CD14-positive monocyte (primary cell): ENCODE measurements at regions of chr13 and their contacts with region 1.

Region 1: GRCh38 chr13:41061075-41061913 is at the start of gene WBP4:
- DNase-seq: peak; percentile 82 to 93 (median 92)
- H3K4me3 ChIP-seq: peak within 1 kb of the TSS; percentile 57 to 99 (median 82)
- H3K4me3 Mint-ChIP-seq: peak within 1 kb of the TSS; percentile 98 to 100
- H3K27ac ChIP-seq: peak within 1 kb of the TSS; percentile 96
- H3K27ac Mint-ChIP-seq: peak within 1 kb of the TSS; percentile 98 to 100 (median 100)
- H3K4me1 ChIP-seq: peaks cover 26 to 46% of the 10 kb centered on the region in 2 donors
- H3K4me1 Mint-ChIP-seq: peaks cover 35% of the 10 kb centered on the region
- H3K27me3 ChIP-seq: no peaks in the 10 kb centered on the region
- H3K27me3 Mint-ChIP-seq: peaks cover 0 to 3% (median 3%) of the 10 kb centered on the region in 3 donors
- CTCF ChIP-seq: no peak
- polyA plus RNA-seq, gene WBP4: 2.8 to 3.8 (median 3.7) TPM

Region 2: GRCh38 chr13:40789275-40790133 is 271.8 kb before region 1 on chr13 and contains the start of gene SLC25A15:
- intact Hi-C with region 1: loop called in 1 of 2 experiments (anchors 10 kb)
- DNase-seq: peak; percentile 70 to 71 (median 71)
- H3K4me3 ChIP-seq: peak within 1 kb of the TSS; percentile 47 to 80 (median 52)
- H3K4me3 Mint-ChIP-seq: peak within 1 kb of the TSS; percentile 82 to 85
- H3K27ac ChIP-seq: peak within 1 kb of the TSS; percentile 16 to 62
- H3K27ac Mint-ChIP-seq: peak within 1 kb of the TSS; percentile 21 to 79 (median 42)
- H3K4me1 ChIP-seq: peaks cover 17 to 20% of the 10 kb centered on the region in 2 donors
- H3K4me1 Mint-ChIP-seq: peaks cover 24% of the 10 kb centered on the region
- H3K27me3 ChIP-seq: no peaks in the 10 kb centered on the region
- H3K27me3 Mint-ChIP-seq: peaks cover 0 to 6% (median 0%) of the 10 kb centered on the region in 3 donors
- CTCF ChIP-seq: peak; percentile 29
- polyA plus RNA-seq, gene SLC25A15: 0.79 to 5.0 (median 1.0) TPM

Region 3: GRCh38 chr13:40969169-40969901 is 92.0 kb before region 1 on chr13:
- intact Hi-C with region 1: loop called in 1 of 2 experiments (anchors 5 kb)
- DNase-seq: peak; percentile 52 to 80 (median 77)
- H3K4me3 ChIP-seq: peak overlapping the region in 1 of 3 experiments; percentile 69
- H3K4me3 Mint-ChIP-seq: peak overlapping the region; percentile 13 to 31
- H3K27ac ChIP-seq: peak overlapping the region; percentile 44 to 71
- H3K27ac Mint-ChIP-seq: peak overlapping the region; percentile 68 to 91 (median 86)
- H3K4me1 ChIP-seq: peaks cover 75 to 99% of the 10 kb centered on the region in 2 donors
- H3K4me1 Mint-ChIP-seq: peaks cover 93% of the 10 kb centered on the region
- H3K27me3 ChIP-seq: no peaks in the 10 kb centered on the region
- H3K27me3 Mint-ChIP-seq: no peaks in the 10 kb centered on the region
- CTCF ChIP-seq: no peak

Region 4: GRCh38 chr13:40982772-40983171 is 78.5 kb before region 1 on chr13:
- intact Hi-C with region 1: loop called in 1 of 2 experiments (anchors 5 kb)
- DNase-seq: peak; percentile 77 to 83 (median 83)
- H3K4me3 ChIP-seq: peak overlapping the region; percentile 56 to 99 (median 92)
- H3K4me3 Mint-ChIP-seq: peak overlapping the region; percentile 61 to 92
- H3K27ac ChIP-seq: peak overlapping the region; percentile 35 to 91
- H3K27ac Mint-ChIP-seq: peak overlapping the region; percentile 85 to 99 (median 92)
- H3K4me1 ChIP-seq: peaks cover 64 to 85% of the 10 kb centered on the region in 2 donors
- H3K4me1 Mint-ChIP-seq: peaks cover 55% of the 10 kb centered on the region
- H3K27me3 ChIP-seq: no peaks in the 10 kb centered on the region
- H3K27me3 Mint-ChIP-seq: no peaks in the 10 kb centered on the region
- CTCF ChIP-seq: no peak

Region 5: GRCh38 chr13:41019011-41019487 is 42.2 kb before region 1 on chr13 and contains the start of gene ELF1:
- intact Hi-C with region 1: loop called in 1 of 2 experiments (anchors 2 kb)
- DNase-seq: peak; percentile 89 to 94 (median 94)
- H3K4me3 ChIP-seq: peak within 1 kb of the TSS; percentile 86 to 100 (median 89)
- H3K4me3 Mint-ChIP-seq: peak within 1 kb of the TSS; percentile 83 to 93
- H3K27ac ChIP-seq: peak within 1 kb of the TSS; percentile 71 to 100
- H3K27ac Mint-ChIP-seq: peak within 1 kb of the TSS; percentile 97 to 100 (median 99)
- H3K4me1 ChIP-seq: peaks cover 32 to 38% of the 10 kb centered on the region in 2 donors
- H3K4me1 Mint-ChIP-seq: peaks cover 38% of the 10 kb centered on the region
- H3K27me3 ChIP-seq: no peaks in the 10 kb centered on the region
- H3K27me3 Mint-ChIP-seq: no peaks in the 10 kb centered on the region
- CTCF ChIP-seq: no peak
- polyA plus RNA-seq, gene ELF1: 63.1 to 83.3 (median 83.3) TPM

Region 6: DNA sequence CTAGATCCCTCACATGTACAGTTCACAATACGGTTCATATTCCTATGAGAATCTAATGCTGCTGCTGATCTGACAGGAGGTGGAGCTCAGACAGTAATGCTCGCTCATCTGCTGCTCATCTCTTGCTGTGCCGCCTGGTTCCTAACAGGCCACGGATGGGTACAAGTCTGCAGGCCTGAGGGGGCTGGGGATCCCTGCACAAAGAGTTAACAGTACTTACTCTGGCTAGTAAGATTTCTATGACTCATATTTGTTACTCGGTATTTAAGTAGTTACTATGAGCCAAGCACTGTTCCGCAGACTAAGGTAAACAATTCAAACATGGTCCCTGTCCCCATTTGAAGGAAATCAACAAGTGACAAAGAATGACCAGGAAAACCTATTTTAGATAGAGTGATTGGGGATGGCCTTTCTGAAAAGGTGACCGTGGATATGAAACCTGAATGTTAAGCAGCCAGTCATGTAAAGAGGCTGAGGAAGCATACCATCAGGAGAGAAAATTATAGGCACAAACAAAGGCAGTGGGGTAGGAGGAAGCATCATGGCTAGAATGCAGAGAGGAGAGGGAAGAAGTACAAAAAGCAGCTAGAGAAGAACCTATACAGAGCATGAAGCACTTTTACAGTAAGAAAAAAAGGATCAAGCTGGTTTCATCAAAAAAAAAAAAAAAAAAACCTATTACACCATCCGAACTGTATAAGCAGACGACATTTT is 20.5 kb before region 1 on chr13:
- intact Hi-C with region 1: no loop called
- DNase-seq: no peak
- H3K4me3 ChIP-seq: no peak overlapping the region
- H3K4me3 Mint-ChIP-seq: no peak overlapping the region
- H3K27ac ChIP-seq: no peak overlapping the region
- H3K27ac Mint-ChIP-seq: peak overlapping the region in 5 of 7 donors; percentile 5 to 53 (median 22)
- H3K4me1 ChIP-seq: no peaks in the 10 kb centered on the region
- H3K4me1 Mint-ChIP-seq: peaks cover 11% of the 10 kb centered on the region
- H3K27me3 ChIP-seq: no peaks in the 10 kb centered on the region
- H3K27me3 Mint-ChIP-seq: no peaks in the 10 kb centered on the region
- CTCF ChIP-seq: no peak

Region 7: DNA sequence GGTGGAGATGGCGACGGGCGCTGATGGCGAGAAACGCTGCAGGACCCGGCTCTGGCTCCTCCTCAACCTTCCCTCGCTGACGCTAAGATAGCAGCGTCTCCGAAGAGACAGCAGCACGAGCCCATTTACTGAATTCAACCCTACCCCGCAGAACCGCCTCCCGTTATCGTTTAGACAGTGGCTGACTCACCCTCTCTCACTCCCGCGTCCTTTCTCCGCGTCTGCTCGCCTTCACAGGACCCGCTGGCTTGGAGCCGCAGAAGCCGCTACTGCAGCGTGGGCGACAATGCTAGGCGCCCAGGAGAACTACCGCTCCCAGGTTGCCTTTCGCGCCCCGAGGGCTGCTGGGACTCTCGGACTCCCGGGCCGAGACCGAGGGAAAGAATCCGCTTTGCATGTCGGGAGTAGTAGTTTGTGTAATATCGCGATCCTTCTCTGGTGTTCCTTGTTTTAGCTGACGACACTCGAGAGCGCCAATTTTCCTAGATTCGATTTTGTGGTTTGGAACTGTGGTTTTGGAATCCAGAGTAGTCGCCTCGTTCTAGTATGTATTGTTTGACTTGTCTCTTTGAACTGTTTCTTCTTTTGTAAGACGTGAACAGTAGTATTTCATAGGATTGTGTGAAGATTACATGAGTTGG is 71.3 kb after region 1 on chr13 and contains the start of gene KBTBD6:
- intact Hi-C with region 1: loop called in 1 of 2 experiments (anchors 5 kb)
- DNase-seq: peak; percentile 92 to 96 (median 94)
- H3K4me3 ChIP-seq: peak within 1 kb of the TSS; percentile 60 to 82 (median 65)
- H3K4me3 Mint-ChIP-seq: peak within 1 kb of the TSS; percentile 97 to 99
- H3K27ac ChIP-seq: peak within 1 kb of the TSS; percentile 51 to 87
- H3K27ac Mint-ChIP-seq: peak within 1 kb of the TSS; percentile 84 to 91 (median 89)
- H3K4me1 ChIP-seq: peaks cover 12 to 28% of the 10 kb centered on the region in 2 donors
- H3K4me1 Mint-ChIP-seq: peaks cover 37% of the 10 kb centered on the region
- H3K27me3 ChIP-seq: no peaks in the 10 kb centered on the region
- H3K27me3 Mint-ChIP-seq: no peaks in the 10 kb centered on the region
- CTCF ChIP-seq: no peak
- polyA plus RNA-seq, gene KBTBD6: 0.37 to 1.2 (median 0.54) TPM